ENCODE measurements at regions of chr17 and their contacts with region 1.

Region 1: DNA sequence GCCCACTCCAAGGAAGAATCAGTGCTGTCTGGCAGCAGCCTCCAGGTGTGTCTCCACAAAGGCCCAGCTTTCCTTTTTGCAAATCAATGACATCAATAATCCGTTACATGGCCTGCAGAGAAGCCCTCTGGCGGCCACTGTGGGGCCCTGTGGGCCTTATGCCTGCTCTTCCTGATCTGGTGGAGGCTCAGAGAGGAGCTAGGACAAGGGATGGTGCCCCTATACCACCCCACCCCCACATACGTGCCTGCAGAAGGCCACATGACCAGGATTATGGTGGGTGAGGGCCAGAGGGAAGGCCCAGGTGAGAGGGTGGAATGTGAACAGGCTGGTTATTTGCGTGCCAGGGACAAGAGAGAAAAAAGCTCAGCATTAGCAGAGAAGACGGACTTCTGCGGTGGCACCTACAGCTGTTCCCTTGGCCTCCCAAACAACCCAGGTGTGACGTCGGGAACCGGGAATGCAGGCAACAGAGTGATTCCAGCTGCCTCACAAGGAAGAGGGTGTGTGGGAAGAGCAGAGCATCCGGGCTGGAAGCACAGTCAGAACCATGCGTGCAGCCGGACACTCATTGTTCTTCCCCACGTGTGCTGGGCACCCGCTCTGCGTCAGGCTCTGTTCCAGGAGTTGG is 22.5 kb downstream of the EIF4A3 start:
- DNase-seq: peak; percentile 41 to 89
- H3K4me3 ChIP-seq: no peak overlapping the region
- H3K27ac ChIP-seq: no peak overlapping the region
- H3K4me1 ChIP-seq: no peaks in the 10 kb centered on the region
- H3K27me3 ChIP-seq: no peaks in the 10 kb centered on the region
- CTCF ChIP-seq: 0 out of 2 replicates have a peak, but pooled peaks have one; percentile 48

Region 2: DNA sequence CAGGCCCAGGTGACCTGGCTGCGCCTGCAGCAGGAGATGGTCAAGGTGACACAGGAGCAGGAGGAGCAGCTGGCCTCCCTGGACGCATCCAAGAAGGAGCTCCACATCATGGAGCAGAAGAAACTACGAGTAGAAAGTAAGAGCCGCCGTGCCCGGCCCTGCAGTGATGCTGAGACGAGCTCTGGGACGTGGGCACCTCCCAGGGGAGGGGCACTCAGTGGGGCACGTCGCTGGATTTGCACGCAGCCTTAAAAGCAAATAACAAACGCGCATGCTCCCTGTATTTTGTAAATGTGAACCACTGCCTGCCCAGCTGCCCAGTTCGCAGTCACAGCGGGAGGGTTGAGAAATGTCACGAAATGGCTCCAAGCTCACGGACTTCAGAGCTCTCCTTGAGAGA is 38.4 kb before region 1 on chr17:
- CTCF ChIA-PET with region 1: no interaction called
- POLR2A ChIA-PET with region 1: no interaction called
- intact Hi-C with region 1: no loop called
- DNase-seq: no peak
- H3K4me3 ChIP-seq: no peak overlapping the region
- H3K27ac ChIP-seq: no peak overlapping the region
- H3K4me1 ChIP-seq: no peaks in the 10 kb centered on the region
- H3K27me3 ChIP-seq: peaks cover 17% of the 10 kb centered on the region; the same call in 1 of the 2 replicates
- CTCF ChIP-seq: no peak

Region 3: DNA sequence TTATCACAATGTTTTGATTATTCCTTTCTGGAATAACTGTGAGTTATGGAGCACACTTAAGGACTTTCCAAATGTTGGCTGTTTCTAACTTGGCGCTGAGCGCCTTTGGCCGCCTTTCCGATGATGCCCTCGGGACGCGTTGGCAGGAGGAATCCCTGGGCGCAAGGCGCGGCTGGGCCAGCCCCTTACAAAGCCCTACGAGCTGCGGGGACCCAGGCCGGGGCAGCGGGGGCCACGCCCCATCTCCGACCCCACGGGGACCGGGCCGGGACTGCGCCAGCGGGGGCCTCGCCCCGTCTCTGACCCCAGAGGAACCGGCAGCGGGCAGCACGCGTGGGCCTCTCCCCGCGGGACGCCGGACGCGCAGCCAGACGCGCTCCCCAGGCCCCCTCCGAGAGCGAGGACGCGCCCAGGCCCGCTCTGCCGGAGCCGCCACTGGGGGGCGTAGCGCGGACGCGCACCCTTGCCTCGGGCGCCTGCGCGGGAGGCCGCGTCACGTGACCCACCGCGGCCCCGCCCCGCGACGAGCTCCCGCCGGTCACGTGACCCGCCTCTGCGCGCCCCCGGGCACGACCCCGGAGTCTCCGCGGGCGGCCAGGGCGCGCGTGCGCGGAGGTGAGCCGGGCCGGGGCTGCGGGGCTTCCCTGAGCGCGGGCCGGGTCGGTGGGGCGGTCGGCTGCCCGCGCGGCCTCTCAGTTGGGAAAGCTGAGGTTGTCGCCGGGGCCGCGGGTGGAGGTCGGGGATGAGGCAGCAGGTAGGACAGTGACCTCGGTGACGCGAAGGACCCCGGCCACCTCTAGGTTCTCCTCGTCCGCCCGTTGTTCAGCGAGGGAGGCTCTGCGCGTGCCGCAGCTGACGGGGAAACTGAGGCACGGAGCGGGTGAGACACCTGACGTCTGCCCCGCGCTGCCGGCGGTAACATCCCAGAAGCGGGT is 23.2 kb before region 1 on chr17 and contains the start of gene GAA:
- CTCF ChIA-PET with region 1: interaction called, 15 read pairs
- POLR2A ChIA-PET with region 1: interaction called, 7 read pairs
- intact Hi-C with region 1: loop called (anchors 1 kb)
- DNase-seq: peak; percentile 36 to 89
- H3K4me3 ChIP-seq: peak within 1 kb of the TSS; percentile 82
- H3K27ac ChIP-seq: no peak within 1 kb of the TSS
- H3K4me1 ChIP-seq: no peaks in the 10 kb centered on the region
- H3K27me3 ChIP-seq: no peaks in the 10 kb centered on the region
- CTCF ChIP-seq: peak; percentile 61; the same call in 1 of the 2 replicates
- total RNA-seq, gene GAA: 86.9 and 126 TPM in 2 replicates

Region 4: DNA sequence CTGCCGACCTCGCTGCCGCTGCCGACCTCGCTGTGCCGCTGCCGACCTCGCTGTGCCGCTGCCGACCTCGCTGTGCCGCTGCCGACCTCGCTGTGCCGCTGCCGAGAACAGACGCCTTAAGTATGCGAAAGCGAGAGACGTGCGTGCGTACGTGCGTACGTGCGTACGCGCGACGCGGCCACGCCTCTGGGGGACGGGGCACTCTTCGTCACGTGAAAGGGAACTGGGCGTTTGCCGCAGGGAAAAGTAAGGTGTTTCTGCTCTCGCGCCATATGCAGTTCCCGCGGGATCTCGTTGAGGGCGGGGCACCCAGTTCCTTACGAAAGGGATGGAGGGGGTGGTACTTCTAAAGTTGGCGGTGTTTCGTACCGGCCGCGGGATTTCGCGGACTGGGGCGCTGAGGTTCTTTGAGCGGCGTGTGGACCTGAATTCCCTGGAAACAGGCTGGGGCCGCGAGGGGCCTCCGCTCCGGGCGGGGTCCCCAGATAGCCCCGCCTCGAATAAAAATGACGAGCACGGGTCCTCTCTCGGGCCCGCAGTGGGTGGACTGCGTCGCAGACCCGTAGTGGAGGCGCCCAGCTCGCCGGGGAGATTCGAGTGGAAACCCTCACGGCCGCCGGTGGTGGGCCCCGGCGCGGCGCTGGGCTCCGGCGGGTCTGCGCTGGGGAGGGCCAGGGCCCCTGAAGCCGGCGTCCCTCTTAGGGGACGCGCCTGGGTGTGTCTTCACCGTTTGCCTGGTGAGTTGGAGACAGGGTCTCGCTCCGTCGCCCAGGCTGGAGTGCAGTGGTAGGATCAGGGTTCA is 22.8 kb after region 1 on chr17 and contains the start of gene EIF4A3:
- CTCF ChIA-PET with region 1: interaction called, 15 read pairs
- POLR2A ChIA-PET with region 1: interaction called, 16 read pairs
- intact Hi-C with region 1: no loop called
- DNase-seq: peak; percentile 91 to 97
- H3K4me3 ChIP-seq: peak within 1 kb of the TSS; percentile 88
- H3K27ac ChIP-seq: peak within 1 kb of the TSS; percentile 55
- H3K4me1 ChIP-seq: peaks cover 30% of the 10 kb centered on the region
- H3K27me3 ChIP-seq: no peaks in the 10 kb centered on the region
- CTCF ChIP-seq: no peak
- total RNA-seq, gene EIF4A3: 114 and 125 TPM in 2 replicates

Region 5: DNA sequence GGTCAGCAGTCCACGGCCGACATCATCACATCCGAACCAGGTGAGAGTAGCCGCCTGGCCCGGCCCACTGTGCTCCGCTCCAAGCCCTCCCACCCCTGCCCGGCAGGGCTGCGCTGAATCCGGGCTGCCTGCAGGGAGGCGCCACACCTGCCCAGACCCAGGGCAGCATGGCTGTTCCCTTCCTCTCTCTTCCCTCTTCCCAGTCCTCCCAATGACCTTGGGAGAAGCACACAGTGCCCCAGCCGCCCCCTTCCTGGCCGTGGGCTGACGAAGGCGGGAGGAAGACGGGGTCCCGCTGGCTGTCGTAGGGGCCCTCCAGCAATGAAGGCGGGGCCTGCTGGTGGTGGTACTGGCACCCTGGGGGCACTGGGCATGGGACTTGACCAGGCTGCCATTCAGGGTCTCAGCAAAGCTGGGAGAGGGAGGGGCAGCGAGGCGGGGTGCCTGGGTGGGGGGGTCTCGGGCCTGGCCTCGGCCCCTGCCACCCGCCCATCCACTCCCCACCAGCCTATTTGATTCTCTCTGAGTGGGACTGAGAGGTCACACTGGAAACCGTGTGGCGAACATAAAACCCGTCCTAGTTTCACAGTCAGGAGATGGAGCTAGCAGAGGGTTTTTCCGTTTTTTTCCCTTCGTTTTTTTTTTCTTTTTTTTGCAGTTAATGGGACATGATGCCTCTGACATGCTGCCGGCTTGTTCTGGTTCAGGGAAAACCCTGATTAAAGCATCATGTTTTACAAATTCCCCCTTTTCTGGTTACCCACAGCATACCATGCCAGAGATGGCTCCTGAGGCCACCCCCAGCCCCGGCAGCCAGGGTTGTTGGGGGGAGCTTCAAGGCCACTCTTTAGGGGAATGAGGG is 1321.4 kb after region 1 on chr17:
- CTCF ChIA-PET with region 1: no interaction called
- POLR2A ChIA-PET with region 1: interaction called, 16 read pairs
- intact Hi-C with region 1: no loop called
- DNase-seq: no peak
- H3K4me3 ChIP-seq: no peak overlapping the region
- H3K27ac ChIP-seq: no peak overlapping the region
- H3K4me1 ChIP-seq: no peaks in the 10 kb centered on the region
- H3K27me3 ChIP-seq: no peaks in the 10 kb centered on the region
- CTCF ChIP-seq: no peak

Measured in PC-9 (cell line).